ENCODE measurements at regions of chr6 and their contacts with region 1.

Region 1: DNA sequence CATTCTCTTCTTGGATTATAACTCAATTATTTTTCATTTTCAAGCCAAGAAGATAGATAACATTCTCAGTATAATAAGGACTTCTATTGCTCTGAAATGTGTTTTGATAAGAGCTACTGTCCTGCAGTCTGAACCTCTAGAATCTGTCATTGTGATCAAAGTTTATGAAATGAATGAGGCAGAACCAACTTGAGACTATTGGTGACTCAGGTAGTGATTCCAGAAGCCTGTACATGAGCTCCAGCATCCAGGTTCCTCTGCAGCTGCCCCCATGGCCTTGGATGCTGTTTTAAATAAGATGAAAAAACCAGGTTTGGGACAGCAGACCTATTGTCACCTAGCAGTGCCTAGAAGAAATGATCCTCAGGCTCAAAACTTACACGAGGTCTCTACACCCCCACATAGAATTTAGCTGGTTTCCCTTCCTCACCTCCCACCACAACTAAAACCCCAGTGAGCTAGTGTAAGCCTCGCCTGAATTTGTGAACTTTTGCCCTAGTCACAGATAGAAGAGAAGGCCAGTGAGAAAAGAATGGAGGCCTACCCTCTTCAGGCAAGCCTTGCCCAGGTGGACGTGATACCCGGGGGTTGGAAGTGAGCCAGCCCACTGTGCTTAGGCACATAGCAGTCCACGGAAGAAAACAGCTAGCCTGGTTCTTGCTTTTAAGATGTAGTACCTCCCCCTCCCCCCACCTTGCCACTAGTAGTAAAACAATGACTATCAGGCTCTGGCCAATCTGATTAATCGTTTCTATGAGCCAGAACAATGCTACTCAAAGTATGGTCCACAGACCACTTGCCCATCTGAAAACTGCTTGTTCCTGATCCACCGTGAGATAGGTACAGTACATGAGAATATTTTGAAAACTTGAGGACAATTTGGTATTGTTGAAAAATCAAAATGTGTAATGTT is 73.0 kb upstream of the SYNJ2 start:
- DNase-seq: no peak
- H3K4me3 Mint-ChIP-seq: no peak overlapping the region
- H3K27ac Mint-ChIP-seq: peak overlapping the region; percentile 2
- H3K4me1 Mint-ChIP-seq: peaks cover 15% of the 10 kb centered on the region
- H3K27me3 Mint-ChIP-seq: no peaks in the 10 kb centered on the region

Region 2: DNA sequence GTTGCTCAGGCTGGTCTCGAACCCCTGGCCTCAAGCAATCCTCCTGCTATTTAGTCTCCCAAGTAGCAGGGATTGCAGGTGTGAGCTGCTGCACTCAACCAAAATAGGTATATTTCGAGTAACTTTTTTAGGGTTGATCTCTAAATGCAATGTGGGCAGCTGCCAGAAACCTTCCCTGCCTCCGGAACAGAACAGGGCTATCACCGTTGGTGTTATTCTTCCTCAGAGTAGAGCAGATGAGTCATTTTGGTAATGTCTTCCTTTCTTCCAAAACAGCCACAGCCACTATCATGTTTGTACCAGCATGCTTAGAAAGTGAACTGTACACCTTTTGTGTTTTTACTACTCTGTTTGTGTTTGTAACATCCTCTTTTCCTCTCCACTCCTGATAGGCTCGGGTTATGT is 41.5 kb before region 1 on chr6:
- intact Hi-C with region 1: loop called (anchors 2 kb)
- DNase-seq: no peak
- H3K4me3 Mint-ChIP-seq: peak overlapping the region; percentile 7
- H3K27ac Mint-ChIP-seq: no peak overlapping the region
- H3K4me1 Mint-ChIP-seq: peaks cover 16% of the 10 kb centered on the region
- H3K27me3 Mint-ChIP-seq: peaks cover 8% of the 10 kb centered on the region

Region 3: GRCh38 chr6:157893238-157893637 is 15.4 kb before region 1 on chr6:
- intact Hi-C with region 1: loop called (anchors 2 kb)
- DNase-seq: no peak
- H3K4me3 Mint-ChIP-seq: peak overlapping the region; percentile 4
- H3K27ac Mint-ChIP-seq: no peak overlapping the region
- H3K4me1 Mint-ChIP-seq: peaks cover 63% of the 10 kb centered on the region
- H3K27me3 Mint-ChIP-seq: no peaks in the 10 kb centered on the region

Measured in activated T-helper 1 cell treated with anti-CD3 and anti-CD28 coated beads, Interleukin-12 subunit alpha, Interleukin-12 subunit beta, Interleukin-2, Interleukin-4 antibody, amounts not matched to agents 30 ng/mL and 10 ng/mL and 1 ng/mL, durations not matched to agents 14 hours and 24 hours and 36 hours (primary cell).